HCT116 (cell line): ENCODE measurements at regions of chr4 and their contacts with region 1.

Region 1: DNA sequence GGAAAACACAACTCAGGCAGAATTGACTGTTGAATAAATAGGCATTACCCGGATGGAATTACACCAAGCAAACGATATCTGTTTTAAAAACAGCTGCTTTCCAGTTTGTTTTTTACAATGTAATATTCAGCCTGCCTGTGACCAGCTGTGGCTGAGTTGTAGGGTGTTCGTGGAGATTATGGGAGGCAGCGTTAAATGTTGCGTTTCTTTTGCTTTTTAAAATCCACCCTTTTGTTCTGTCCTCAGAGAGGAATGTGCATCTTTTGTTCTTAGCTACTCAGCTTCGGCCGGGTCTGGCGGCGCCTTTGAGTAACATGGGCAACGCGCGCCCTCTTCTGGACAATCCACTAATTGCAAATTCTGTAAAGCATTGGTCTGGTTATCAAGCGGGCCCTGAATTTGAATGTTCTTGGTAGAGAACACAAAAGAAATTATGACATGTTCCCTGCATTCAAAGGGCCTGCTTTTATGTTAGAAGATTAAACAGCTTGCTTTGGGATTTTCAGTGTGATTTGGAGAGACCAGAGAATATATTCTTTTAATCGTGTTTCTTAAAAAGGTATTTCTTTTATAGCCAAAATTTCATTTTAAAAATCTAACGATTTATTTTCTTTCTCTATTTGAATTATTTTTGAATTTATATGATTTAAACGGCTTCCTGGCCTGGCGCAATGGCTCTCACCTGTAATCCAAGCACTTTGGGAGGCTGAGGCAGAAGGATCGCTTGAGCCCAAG is 76.3 kb upstream of the TRIM2 start:
- DNase-seq: peak; percentile 73
- ATAC-seq: peak; percentile 87
- H3K4me3 ChIP-seq: no peak overlapping the region
- H3K27ac ChIP-seq: no peak overlapping the region
- H3K4me1 ChIP-seq: peaks cover 0 to 5% of the 10 kb centered on the region in 2 experiments; a peak in 1 of 4 replicates
- H3K27me3 ChIP-seq: no peaks in the 10 kb centered on the region
- CTCF ChIP-seq: peak; percentile 68 to 91 (median 87)
- POLR2A ChIP-seq: no peak
- RAD21 ChIP-seq: peak; percentile 94

Region 2: DNA sequence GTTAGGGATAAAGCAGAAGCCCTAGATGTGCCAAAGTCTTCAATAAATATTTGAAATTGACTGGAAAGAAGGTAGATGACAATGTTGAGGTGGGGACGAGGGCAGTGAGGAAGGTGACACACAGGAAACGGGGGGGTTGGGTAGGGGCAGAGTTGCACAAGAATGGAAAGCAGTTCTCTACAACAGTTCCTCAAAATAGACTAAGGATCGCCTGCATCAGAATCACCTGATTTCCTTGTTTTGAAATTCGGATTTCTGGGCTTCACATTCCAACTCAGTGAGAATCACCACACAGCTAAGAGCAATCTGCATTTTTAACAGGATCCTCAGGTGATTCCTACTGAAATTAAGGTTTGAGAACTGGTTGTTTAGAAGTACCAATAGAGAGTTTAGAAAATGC is 277.6 kb before region 1 on chr4:
- CTCF ChIA-PET with region 1: interaction called, 11 read pairs
- POLR2A ChIA-PET with region 1: no interaction called
- RAD21 ChIA-PET with region 1: interaction called in 1 of 2 experiments, 6 read pairs
- intact Hi-C with region 1: loop called (anchors 1 kb)
- DNase-seq: no peak
- ATAC-seq: no peak
- H3K4me3 ChIP-seq: no peak overlapping the region
- H3K27ac ChIP-seq: no peak overlapping the region
- H3K4me1 ChIP-seq: no peaks in the 10 kb centered on the region
- H3K27me3 ChIP-seq: no peaks in the 10 kb centered on the region
- CTCF ChIP-seq: no peak
- POLR2A ChIP-seq: no peak
- RAD21 ChIP-seq: no peak

Region 3: DNA sequence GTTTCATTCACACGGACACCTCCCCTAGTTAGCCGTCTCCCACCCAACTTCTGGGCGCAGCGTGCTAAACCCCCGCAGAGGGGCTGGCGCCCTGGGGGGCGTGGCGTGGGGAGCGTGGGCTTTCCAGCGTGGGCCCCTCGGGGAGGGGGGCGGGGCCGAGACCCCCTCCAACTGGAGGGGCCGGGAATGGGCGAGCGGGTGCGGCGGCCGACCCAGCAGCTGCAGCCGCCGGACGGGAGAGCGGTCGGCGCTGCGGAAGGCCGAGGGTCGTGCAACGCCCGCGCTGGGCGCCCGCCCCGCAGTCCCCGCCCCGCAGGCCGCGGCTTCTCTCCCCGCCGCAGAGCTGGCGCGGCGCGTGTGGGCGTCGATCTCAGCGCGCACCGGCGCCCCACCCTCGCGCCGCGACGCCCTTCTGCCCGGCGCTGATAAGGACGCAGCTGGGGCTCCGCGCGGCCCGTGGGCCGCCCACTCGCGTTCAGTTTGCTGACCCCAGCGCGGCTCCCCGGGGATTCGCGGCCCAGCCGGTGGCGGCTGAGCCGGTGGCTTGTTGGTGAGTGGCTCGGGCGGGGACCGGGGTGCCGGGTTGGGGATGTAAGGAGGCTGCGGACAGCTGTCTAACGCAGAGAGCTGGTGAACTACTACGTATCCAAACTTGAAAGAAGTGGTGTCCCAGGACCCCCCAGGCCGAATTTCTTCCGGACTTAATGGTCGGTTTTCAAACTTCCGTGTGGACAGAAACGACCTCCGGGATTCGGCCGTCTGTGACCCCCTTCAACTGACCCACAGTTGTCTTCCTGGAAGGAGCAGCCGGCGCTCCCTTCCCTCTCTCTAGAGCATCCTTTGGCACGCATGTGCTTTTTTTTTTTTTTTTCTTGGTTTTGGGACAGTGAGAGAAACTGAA is 190.3 kb before region 1 on chr4:
- CTCF ChIA-PET with region 1: interaction called, 6 read pairs
- POLR2A ChIA-PET with region 1: no interaction called
- RAD21 ChIA-PET with region 1: no interaction called
- intact Hi-C with region 1: loop called (anchors 5 kb)
- DNase-seq: no peak
- ATAC-seq: peak; percentile 26
- H3K4me3 ChIP-seq: peak overlapping the region; percentile 60 to 66
- H3K27ac ChIP-seq: no peak overlapping the region
- H3K4me1 ChIP-seq: peaks cover 14 to 32% of the 10 kb centered on the region in 2 experiments
- H3K27me3 ChIP-seq: peaks cover 21% of the 10 kb centered on the region; the same call in 1 of the 2 replicates
- CTCF ChIP-seq: no peak
- POLR2A ChIP-seq: no peak
- RAD21 ChIP-seq: no peak

Region 4: DNA sequence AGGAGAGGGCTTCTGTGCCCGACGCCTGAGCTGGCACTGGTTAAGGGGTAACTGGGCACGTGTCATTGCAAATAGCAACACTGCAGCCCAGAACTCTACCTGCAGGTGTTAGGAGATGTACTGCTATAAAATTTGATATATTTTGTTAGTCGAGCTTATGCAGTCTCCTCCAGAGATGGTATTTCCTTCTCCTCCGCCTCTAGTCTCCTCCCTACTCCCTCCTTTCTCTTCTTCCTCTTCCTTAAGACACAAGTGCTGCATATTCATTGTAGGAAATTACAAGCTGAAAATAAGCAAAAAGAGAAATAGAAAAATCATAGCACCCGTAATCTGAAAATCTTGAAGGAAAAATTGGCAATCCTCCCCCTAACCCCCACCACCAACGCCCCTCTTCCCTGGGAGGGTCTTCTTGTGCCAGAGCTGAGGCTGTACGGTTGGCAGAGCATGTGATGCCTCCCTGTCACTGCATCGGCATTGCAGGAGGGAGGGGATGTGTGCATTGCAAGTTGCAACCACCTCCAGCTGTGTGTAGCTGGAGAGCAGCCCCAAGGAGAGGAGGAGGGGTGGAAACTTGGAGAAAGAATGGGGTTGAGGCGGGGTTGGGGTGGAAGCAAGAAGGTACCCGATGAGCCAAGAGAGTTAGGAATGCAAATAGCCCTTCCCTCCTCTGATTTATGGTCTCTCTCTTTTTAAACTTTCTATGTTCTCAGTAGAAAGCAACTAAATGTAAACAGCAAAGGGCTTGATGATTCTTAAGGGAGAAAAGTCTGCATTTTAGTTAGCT is 168.3 kb after region 1 on chr4:
- CTCF ChIA-PET with region 1: no interaction called
- POLR2A ChIA-PET with region 1: no interaction called
- RAD21 ChIA-PET with region 1: no interaction called
- intact Hi-C with region 1: no loop called
- DNase-seq: no peak
- ATAC-seq: no peak
- H3K4me3 ChIP-seq: no peak overlapping the region
- H3K27ac ChIP-seq: no peak overlapping the region
- H3K4me1 ChIP-seq: no peaks in the 10 kb centered on the region
- H3K27me3 ChIP-seq: no peaks in the 10 kb centered on the region
- CTCF ChIP-seq: no peak
- POLR2A ChIP-seq: no peak
- RAD21 ChIP-seq: no peak